Dendritic cell treated with granulocyte-macrophage colony-stimulating factor and Interleukin-4, amounts not matched to agents 40 ng/mL and 50 ng/mL, for 4 days (primary cell): ENCODE measurements at regions of chr2 and their contacts with region 1.

Region 1: GRCh38 chr2:189569295-189569910 is 11.2 kb downstream of the SLC40A1 start:
- H3K4me3 Mint-ChIP-seq: peak overlapping the region; percentile 51
- H3K27ac Mint-ChIP-seq: peak overlapping the region; percentile 82
- H3K4me1 Mint-ChIP-seq: peaks cover 65% of the 10 kb centered on the region
- H3K27me3 Mint-ChIP-seq: no peaks in the 10 kb centered on the region

Region 2: DNA sequence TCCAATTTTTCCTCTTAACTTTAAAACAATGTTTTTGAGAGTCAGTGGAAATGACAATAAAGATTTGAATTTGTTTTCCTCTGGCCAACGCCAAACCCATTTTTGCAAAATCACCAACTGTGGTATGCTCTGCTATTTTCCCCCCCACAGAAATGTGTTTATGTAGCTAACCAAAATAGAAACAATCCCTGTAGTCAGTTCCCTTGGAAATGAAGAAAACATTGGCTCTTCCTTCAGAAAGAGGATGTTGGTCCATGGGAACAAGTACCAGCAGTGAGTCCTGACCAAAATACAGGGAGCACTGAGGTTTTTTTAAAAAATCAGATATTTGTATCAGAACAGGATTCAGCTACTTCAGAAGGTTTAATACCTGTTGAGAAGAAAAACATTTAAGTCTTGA is 54.1 kb before region 1 on chr2:
- intact Hi-C with region 1: loop called (anchors 2 kb)
- H3K4me3 Mint-ChIP-seq: no peak overlapping the region
- H3K27ac Mint-ChIP-seq: peak overlapping the region; percentile 45
- H3K4me1 Mint-ChIP-seq: peaks cover 61% of the 10 kb centered on the region
- H3K27me3 Mint-ChIP-seq: no peaks in the 10 kb centered on the region